Esophagus muscularis mucosa (tissue), 4 donors: ENCODE measurements at regions of chr12 and their contacts with region 1.

Region 1: GRCh38 chr12:119544765-119545625 is 48.6 kb upstream of the TMEM233 start:
- DNase-seq: no peak
- H3K4me3 ChIP-seq: no peak overlapping the region
- H3K27ac ChIP-seq: no peak overlapping the region
- H3K4me1 ChIP-seq: no peaks in the 10 kb centered on the region
- H3K27me3 ChIP-seq: peaks cover 0 to 25% (median 0%) of the 10 kb centered on the region in 4 donors
- CTCF ChIP-seq: peak; percentile 84 to 94 (median 84)
- EP300 ChIP-seq: no peak
- POLR2A ChIP-seq: no peak

Region 2: DNA sequence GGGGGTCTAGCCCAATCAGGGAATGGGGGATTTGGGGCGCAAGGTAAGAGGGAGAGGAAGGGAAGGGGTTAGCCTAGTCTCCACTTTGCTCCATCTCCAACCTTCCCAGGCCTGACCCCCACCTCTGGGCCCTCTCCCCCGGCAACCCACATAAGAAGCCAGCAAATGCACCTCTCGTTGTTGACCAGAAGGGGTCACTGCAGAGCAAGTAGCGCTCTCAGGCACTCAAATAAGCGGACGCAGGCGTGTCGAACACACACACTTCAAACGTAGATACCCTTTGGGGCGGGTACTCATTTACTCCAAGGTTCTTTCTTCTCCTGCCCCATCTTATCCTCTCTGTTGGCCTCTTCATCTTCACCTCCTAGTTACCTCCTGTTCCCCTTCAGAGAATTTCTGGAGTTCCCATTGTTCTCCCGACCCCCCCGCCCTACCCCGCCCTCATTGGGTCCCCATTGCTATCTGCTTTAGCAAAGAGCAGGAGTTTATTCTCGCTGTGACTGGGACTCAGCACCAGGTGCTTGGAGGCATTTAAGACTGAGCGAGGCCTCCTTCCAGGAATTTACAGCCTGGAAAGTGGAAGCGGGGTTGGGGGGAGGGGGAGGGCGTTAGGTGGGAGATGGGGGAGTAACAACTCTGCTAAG is 565.1 kb before region 1 on chr12:
- intact Hi-C with region 1: loop called (anchors 5 kb)
- DNase-seq: no peak
- H3K4me3 ChIP-seq: no peak overlapping the region
- H3K27ac ChIP-seq: no peak overlapping the region
- H3K4me1 ChIP-seq: peaks cover 17 to 22% (median 20%) of the 10 kb centered on the region in 4 donors
- H3K27me3 ChIP-seq: peaks cover 0 to 75% (median 26%) of the 10 kb centered on the region in 4 donors
- CTCF ChIP-seq: peak; percentile 54 to 76 (median 56)
- EP300 ChIP-seq: no peak
- POLR2A ChIP-seq: no peak

Region 3: GRCh38 chr12:119758722-119759121 is 213.7 kb after region 1 on chr12:
- intact Hi-C with region 1: no loop called
- DNase-seq: no peak
- H3K4me3 ChIP-seq: no peak overlapping the region
- H3K27ac ChIP-seq: no peak overlapping the region
- H3K4me1 ChIP-seq: no peaks in the 10 kb centered on the region
- H3K27me3 ChIP-seq: no peaks in the 10 kb centered on the region
- CTCF ChIP-seq: no peak
- EP300 ChIP-seq: no peak
- POLR2A ChIP-seq: no peak